ENCODE measurements at regions of chr18 and their contacts with region 1.

Region 1: DNA sequence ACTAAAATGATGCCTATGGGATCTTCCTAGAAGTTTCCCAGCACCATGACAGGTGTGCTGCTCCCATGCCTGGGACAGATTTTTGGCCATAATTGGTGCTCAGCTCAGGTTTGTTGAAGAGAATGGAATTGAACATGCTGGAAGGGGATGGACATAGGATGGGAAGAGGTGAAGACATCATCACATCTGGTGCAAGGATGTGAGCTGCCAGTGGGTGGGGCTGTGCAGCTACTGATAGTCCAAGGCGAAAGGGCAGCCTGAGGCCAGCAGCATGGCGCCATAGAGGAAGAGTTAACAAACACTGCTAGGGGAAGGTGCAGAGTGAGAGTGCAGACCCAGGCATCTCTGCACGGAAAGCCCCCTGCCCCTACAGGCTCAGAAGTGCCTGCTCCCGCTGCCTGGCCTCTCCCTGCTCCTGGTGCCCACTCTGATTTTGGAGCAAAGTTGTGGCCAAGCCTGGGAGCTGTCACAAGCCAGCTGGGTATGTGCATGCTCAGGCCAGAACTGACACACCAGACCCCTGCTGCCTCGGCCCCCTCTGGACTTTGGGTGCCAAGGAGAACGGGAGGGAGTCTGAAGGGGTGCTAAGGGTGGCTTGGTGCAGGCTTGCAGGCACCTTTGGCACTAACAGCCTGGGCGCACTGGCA is 178.6 kb downstream of the ZBTB7C start:
- DNase-seq: peak; percentile 84
- ATAC-seq: peak; percentile 96
- H3K4me3 Mint-ChIP-seq: no peak overlapping the region
- H3K27ac Mint-ChIP-seq: no peak overlapping the region
- H3K4me1 Mint-ChIP-seq: peaks cover 6% of the 10 kb centered on the region
- H3K27me3 Mint-ChIP-seq: no peaks in the 10 kb centered on the region
- CTCF ChIP-seq: peak; percentile 65

Region 2: GRCh38 chr18:48030616-48031480 is 199.7 kb before region 1 on chr18:
- CTCF ChIA-PET with region 1: interaction called, 10 read pairs
- POLR2A ChIA-PET with region 1: no interaction called
- DNase-seq: peak; percentile 59
- ATAC-seq: peak; percentile 91
- H3K4me3 Mint-ChIP-seq: no peak overlapping the region
- H3K27ac Mint-ChIP-seq: no peak overlapping the region
- H3K4me1 Mint-ChIP-seq: peaks cover 19% of the 10 kb centered on the region
- H3K27me3 Mint-ChIP-seq: no peaks in the 10 kb centered on the region
- CTCF ChIP-seq: peak; percentile 42; the same call in 1 of the 2 replicates

Region 3: GRCh38 chr18:48059455-48060010 is 171.1 kb before region 1 on chr18:
- CTCF ChIA-PET with region 1: no interaction called
- POLR2A ChIA-PET with region 1: no interaction called
- DNase-seq: peak; percentile 40
- ATAC-seq: peak; percentile 78
- H3K4me3 Mint-ChIP-seq: no peak overlapping the region
- H3K27ac Mint-ChIP-seq: no peak overlapping the region
- H3K4me1 Mint-ChIP-seq: peaks cover 29% of the 10 kb centered on the region
- H3K27me3 Mint-ChIP-seq: peaks cover 5% of the 10 kb centered on the region; the same call in 1 of the 2 replicates
- CTCF ChIP-seq: no peak

Region 4: DNA sequence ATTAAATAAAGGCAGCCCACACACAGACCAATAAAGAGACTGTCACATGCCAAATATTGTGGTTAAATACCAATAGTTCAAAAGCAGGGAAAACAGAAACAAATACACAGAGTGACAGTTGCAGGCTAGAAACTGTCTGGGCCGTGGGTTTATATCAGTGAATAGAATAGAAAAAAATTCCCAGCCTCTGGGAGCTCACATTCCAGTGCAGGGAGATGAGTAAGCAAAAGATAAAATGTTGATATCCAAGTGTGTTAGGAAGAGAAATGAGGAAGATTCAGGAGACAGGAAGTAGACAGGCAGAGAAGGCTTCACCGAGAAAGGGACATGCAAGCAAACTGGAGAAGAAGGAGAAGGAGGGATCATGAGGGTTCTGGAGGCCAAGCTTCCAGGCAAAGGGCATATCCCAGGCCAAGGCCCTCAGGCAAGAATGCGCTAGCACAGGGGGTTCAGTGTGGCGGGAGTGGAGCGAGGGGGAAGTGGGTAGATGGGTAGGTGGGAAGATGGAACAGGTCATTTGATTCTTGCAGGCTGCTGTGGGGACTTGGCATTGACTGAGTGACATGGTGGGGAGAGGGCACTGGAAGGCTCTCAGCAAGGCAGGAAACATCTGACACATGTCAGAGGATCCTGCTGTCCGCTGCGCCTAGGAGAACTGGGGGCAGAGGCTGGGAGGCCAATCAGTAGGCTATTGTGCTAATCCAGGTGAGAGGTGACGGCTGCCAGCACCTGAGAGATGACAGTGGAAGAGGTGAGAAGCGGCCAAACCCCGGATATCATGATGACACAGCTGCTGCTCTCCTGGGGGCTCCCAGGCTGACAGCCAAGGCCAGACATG is 89.4 kb after region 1 on chr18:
- CTCF ChIA-PET with region 1: interaction called, 13 read pairs
- POLR2A ChIA-PET with region 1: no interaction called
- DNase-seq: no peak
- ATAC-seq: no peak
- H3K4me3 Mint-ChIP-seq: no peak overlapping the region
- H3K27ac Mint-ChIP-seq: no peak overlapping the region
- H3K4me1 Mint-ChIP-seq: peaks cover 13% of the 10 kb centered on the region
- H3K27me3 Mint-ChIP-seq: peaks cover 2% of the 10 kb centered on the region
- CTCF ChIP-seq: no peak

Region 5: DNA sequence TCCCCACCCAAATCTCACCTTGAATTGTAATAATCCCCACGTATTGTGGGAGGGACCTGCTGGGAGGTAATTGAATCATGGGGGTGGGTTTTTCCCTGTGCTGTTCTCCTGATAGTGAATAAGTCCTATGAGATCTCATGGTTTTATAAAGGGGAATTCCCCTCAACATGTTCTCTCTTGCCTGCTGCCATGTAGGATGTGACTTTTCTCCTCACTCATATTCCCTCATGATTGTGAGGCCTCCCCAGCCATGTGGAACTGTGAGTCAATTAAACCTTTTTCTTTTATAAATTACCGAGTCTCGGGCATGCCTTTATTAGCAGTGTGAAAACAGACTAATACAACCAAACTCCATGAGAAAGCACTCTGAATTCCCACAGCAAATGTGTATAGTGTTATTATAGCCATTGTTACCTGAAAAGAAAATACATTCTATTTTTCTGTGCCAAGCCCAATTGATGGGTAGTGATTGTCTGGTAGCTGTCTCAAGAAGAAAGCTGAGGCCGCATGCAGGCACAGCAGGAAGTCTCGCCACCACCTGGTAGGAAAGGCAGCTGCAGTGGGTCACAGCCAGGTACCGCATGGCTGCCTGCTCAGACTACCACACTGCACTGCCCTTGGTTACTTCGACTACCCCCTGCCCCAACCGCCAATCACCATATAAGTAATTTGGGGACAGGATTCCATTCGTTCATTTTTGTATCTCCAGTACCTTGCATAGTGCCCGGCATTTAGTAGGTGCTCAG is 188.9 kb after region 1 on chr18:
- CTCF ChIA-PET with region 1: interaction called, 13 read pairs
- POLR2A ChIA-PET with region 1: no interaction called
- DNase-seq: peak; percentile 50
- ATAC-seq: peak; percentile 69
- H3K4me3 Mint-ChIP-seq: no peak overlapping the region
- H3K27ac Mint-ChIP-seq: no peak overlapping the region
- H3K4me1 Mint-ChIP-seq: peaks cover 27% of the 10 kb centered on the region
- H3K27me3 Mint-ChIP-seq: peaks cover 61% of the 10 kb centered on the region
- CTCF ChIP-seq: no peak